PC-3 (cell line): ENCODE measurements at regions of chr4 and their contacts with region 1.

Region 1: GRCh38 chr4:169659716-169660670 is 39.6 kb downstream of the CLCN3 start:
- DNase-seq: peak; percentile 96
- ATAC-seq: peak; percentile 88
- H3K4me3 ChIP-seq: peak overlapping the region; percentile 74
- H3K27ac ChIP-seq: peak overlapping the region; percentile 98
- H3K4me1 ChIP-seq: peaks cover 42% of the 10 kb centered on the region
- H3K27me3 ChIP-seq: no peaks in the 10 kb centered on the region
- CTCF ChIP-seq: no peak

Region 2: GRCh38 chr4:169523796-169524195 is 136.2 kb before region 1 on chr4:
- CTCF ChIA-PET with region 1: no interaction called
- POLR2A ChIA-PET with region 1: no interaction called
- intact Hi-C with region 1: no loop called
- DNase-seq: no peak
- ATAC-seq: no peak
- H3K4me3 ChIP-seq: no peak overlapping the region
- H3K27ac ChIP-seq: no peak overlapping the region
- H3K4me1 ChIP-seq: no peaks in the 10 kb centered on the region
- H3K27me3 ChIP-seq: no peaks in the 10 kb centered on the region
- CTCF ChIP-seq: no peak

Region 3: DNA sequence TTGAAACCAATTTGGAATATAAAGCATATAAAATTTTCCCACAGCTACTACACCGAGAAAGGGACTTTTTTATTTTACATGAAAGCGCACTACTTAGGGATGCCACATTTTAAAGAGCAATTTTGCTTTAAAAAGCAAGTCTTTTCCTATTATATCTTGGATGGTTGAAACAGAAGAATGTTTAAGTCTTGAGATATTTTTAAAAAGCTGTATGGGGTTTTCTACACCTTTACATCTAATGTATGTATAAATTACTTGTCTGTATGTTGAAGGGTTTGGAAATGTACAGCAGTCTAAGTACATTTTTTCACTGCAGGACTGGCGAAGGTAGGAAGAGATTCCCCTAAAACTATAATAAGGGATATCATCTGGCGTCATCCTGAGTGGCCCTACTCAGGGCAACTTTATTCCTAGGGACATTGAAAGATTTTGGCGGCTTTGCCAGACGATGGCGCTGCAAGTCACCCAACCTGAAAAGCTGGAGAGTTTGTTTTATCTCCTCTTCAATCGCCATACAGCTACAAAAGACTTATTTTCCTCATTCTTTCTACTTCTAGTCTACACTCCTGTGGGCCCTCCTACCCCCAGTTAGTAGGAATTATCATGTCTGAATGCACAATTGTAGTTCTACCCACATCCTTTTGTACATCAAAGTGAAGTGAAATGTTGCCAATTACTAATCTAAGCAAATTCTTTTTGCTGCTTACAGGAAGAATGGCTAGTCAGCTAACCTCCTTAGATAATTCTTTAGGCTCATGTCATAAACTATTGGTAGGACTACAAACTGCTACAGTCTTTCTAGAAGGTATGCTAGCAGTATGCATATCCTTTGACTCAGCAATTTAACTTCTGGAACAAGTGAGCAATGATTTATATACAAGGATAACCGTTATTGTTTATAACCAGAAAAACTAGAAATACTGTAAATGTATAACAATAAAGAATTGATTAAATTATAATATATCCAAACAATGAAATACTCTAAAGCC is 46.8 kb before region 1 on chr4:
- CTCF ChIA-PET with region 1: no interaction called
- POLR2A ChIA-PET with region 1: no interaction called
- intact Hi-C with region 1: loop called (anchors 1 kb)
- DNase-seq: peak; percentile 82
- ATAC-seq: peak; percentile 68
- H3K4me3 ChIP-seq: peak overlapping the region; percentile 100
- H3K27ac ChIP-seq: peak overlapping the region; percentile 33; the same call in 1 of the 2 replicates
- H3K4me1 ChIP-seq: peaks cover 12% of the 10 kb centered on the region
- H3K27me3 ChIP-seq: no peaks in the 10 kb centered on the region
- CTCF ChIP-seq: peak; percentile 75

Region 4: GRCh38 chr4:169619959-169620879 is 39.8 kb before region 1 on chr4 and contains the start of gene CLCN3:
- CTCF ChIA-PET with region 1: interaction called, 3 read pairs
- POLR2A ChIA-PET with region 1: no interaction called
- intact Hi-C with region 1: loop called (anchors 1 kb)
- DNase-seq: peak; percentile 98
- ATAC-seq: peak; percentile 92
- H3K4me3 ChIP-seq: peak within 1 kb of the TSS; percentile 92
- H3K27ac ChIP-seq: peak within 1 kb of the TSS; percentile 83
- H3K4me1 ChIP-seq: peaks cover 19% of the 10 kb centered on the region
- H3K27me3 ChIP-seq: no peaks in the 10 kb centered on the region
- CTCF ChIP-seq: no peak
- total RNA-seq, gene CLCN3: 13.2 and 16.9 TPM in 2 replicates

Region 5: DNA sequence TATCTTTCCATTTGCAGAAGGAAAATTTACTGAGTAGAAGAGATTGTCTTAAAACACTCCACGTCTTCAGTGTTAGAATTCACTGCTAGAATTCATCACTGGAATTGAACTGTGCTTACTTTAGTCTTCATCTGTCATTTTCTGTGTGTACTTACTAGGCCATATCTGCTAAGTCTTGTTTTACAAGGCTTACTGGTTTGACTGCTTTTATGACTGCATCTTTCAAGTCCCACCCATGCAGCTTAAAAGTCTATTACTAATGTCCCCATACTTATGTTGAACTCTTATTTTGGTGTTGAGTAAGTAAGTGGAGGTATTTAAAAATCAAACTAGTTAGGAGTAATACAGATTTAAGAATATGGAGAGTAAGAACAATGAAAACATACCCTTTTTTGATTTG is 25.0 kb before region 1 on chr4:
- CTCF ChIA-PET with region 1: no interaction called
- POLR2A ChIA-PET with region 1: no interaction called
- intact Hi-C with region 1: loop called (anchors 1 kb)
- DNase-seq: peak; percentile 87
- ATAC-seq: peak; percentile 80
- H3K4me3 ChIP-seq: no peak overlapping the region
- H3K27ac ChIP-seq: peak overlapping the region; percentile 16; the same call in 1 of the 2 replicates
- H3K4me1 ChIP-seq: peaks cover 9% of the 10 kb centered on the region
- H3K27me3 ChIP-seq: no peaks in the 10 kb centered on the region
- CTCF ChIP-seq: no peak

Region 6: DNA sequence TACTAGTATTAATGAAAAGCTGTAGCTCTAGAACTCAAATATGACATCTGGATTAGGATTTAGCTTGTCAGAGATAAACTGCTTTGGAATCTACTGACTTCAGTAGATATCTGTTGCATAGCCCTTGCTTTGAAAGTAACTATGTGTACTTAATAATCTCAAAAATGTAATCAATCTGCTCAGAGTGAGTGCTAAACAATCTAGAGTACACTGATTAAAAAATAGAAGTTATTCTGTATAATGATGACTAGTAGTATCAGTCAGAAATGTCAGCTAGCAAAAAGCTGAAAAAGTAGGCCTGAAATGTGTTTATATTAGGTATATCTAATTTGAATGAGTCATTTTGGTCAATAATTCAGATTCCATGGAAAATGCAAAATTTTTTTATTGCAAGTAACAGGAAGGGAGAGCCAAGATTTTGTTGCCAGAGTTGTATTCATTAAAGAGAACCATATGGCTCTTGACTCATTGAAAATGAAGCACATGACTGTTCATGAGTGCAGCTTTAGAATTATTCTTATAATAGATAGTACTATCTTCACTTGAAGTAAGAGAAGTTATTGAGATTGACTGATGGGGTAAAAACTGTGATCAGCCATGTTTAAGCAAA is 19.6 kb before region 1 on chr4:
- CTCF ChIA-PET with region 1: no interaction called
- POLR2A ChIA-PET with region 1: no interaction called
- intact Hi-C with region 1: loop called (anchors 1 kb)
- DNase-seq: peak; percentile 36
- ATAC-seq: peak; percentile 86
- H3K4me3 ChIP-seq: no peak overlapping the region
- H3K27ac ChIP-seq: peak overlapping the region; percentile 23; the same call in 1 of the 2 replicates
- H3K4me1 ChIP-seq: no peaks in the 10 kb centered on the region
- H3K27me3 ChIP-seq: no peaks in the 10 kb centered on the region
- CTCF ChIP-seq: no peak

Region 7: GRCh38 chr4:169723207-169723965 is 63.4 kb after region 1 on chr4:
- CTCF ChIA-PET with region 1: no interaction called
- POLR2A ChIA-PET with region 1: no interaction called
- intact Hi-C with region 1: loop called (anchors 5 kb)
- DNase-seq: peak; percentile 31
- ATAC-seq: 0 out of 2 replicates have a peak, but pooled peaks have one; percentile 37
- H3K4me3 ChIP-seq: no peak overlapping the region
- H3K27ac ChIP-seq: no peak overlapping the region
- H3K4me1 ChIP-seq: no peaks in the 10 kb centered on the region
- H3K27me3 ChIP-seq: no peaks in the 10 kb centered on the region
- CTCF ChIP-seq: peak; percentile 56